Cardiac septum (tissue), 1 donor: ENCODE measurements at regions of chr22 and their contacts with region 1.

Region 1: DNA sequence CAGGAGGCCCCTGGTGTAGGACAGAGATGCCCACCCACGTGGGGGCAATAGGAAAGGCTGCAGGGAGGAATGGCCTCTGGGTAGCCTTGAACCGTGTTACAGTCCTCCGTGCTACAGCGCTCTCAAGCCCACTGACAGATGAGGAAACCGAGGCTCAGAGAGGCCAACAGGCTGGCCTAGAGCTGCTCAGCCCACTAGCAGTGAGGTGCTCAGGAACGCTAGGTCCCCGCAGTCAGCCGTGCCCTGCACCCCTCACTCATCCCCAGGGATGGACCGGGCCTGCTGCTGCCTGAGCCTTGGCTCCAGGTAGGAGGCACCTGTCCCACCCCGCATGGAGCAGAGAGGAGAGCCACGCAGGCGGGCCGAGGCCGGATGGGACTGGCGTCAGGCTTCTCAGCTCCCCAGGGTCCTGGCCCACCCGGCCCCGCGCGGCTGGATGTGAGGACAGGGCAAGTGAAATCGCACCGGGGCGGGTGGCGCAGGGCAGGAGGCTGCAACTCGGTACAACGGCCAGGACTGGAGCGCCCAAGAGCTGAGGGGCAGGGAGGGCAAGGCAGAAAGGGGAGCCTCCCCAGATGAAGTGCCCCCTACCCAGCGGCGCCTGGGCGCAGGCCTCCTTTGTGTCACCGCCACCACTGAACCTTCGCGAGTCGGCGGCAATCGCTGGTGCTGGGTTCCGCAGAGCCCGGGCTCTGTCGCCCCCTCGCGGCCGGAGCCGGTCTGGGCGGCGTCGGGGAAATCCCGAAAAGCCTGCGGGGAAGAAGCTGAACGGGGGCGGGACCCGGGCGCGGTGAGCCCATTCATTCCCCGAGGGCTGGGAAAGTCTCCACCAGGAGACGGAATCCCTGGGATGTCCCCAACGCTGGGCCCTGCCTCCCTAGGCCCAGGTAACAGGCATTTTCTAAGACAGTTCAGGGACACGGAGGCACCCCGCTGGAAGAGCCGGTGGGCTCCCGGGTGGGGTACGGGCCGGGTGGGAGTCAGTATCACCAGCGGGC is 8.4 kb upstream of the SLC2A11 start:
- DNase-seq: peak; percentile 93

Region 2: DNA sequence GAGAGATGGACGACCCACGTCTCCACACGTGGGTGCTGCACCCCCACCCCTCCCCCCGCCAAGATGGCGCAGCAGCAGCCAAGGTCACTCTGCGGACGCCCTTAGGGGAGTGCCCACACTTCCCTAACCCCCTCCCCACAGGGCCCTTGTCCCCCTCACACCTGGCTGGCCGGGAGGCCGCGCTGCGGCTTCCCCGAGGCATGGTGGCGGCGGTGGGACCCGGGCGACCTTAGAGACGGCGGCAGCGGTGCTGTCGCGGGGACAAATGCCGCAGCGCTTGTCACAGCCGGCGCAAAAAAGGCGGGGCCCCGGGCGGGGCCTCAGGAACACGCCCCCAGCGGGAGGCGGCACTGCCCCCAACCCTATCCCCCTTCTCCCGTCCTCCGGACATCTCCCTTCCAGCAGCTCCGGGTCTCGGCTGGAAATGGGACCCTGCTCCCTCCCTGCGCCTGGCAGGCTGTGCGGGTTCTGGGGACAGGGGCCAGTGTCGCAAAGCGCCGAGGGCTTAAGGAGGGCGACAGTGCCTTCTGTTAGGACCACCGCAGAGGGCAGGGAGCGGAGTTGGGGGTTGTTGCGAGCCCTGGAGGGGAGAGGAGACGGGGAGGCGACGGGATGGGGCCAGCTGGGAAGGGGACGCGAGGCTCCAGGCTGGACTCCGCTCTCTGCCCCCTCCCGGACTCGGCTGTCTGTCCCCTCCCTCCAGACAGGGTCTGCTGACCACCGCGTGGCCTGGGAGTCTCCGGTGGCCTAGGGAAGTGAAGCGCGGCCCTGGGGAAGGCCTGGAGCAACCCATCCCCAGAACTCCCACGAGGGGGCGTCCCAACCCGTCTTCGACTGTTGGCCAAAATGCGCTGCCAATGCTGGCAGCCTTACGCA is 81.4 kb before region 1 on chr22 and contains the start of gene CHCHD10:
- intact Hi-C with region 1: loop called (anchors 1 kb)
- DNase-seq: peak; percentile 92
- total RNA-seq, gene CHCHD10: 1,008 TPM

Region 3: GRCh38 chr22:23786752-23787599 is 62.3 kb before region 1 on chr22 and contains the start of gene SMARCB1:
- intact Hi-C with region 1: loop called (anchors 5 kb)
- DNase-seq: peak; percentile 95
- total RNA-seq, gene SMARCB1: 50.4 TPM

Region 4: GRCh38 chr22:23823331-23823791 is 25.9 kb before region 1 on chr22:
- intact Hi-C with region 1: loop called (anchors 1 kb)
- DNase-seq: no peak